ENCODE measurements at regions of chr3 and their contacts with region 1.

Region 1: DNA sequence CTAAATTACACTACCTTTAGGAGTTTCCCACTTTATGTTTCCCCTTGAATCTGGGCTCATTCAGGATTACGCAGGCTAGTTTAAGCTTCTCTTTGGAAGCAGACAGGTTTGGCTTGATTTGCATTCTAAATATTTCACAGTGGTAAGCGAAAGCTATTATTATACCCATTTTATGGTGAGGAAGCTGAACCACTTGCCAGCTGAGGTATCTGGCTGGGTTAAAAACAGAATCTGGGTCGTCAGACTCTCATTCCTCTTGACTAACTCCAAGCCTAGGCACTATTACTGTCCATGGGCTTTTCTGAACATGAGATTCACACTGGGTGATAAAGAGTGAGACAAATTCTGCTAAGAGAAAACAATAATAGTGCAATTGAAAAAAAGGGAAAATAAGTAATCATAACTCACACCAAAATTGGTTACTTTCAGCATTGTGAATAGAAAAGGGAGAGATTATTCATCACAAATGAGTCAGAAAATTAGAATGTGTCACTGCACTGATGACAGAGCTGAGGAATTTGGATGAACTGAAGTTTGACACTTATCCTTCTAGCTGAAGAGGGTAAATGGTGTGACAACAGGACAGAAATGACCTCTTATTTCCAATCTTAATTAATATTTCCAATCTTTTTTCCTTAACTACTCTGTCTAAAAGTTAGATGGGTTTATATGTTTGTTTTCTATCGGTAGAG is 211.3 kb downstream of the TIGIT start:
- DNase-seq: no peak
- H3K4me3 Mint-ChIP-seq: no peak overlapping the region
- H3K27ac Mint-ChIP-seq: no peak overlapping the region
- H3K4me1 Mint-ChIP-seq: peaks cover 9% of the 10 kb centered on the region
- H3K27me3 Mint-ChIP-seq: peaks cover 18% of the 10 kb centered on the region

Region 2: DNA sequence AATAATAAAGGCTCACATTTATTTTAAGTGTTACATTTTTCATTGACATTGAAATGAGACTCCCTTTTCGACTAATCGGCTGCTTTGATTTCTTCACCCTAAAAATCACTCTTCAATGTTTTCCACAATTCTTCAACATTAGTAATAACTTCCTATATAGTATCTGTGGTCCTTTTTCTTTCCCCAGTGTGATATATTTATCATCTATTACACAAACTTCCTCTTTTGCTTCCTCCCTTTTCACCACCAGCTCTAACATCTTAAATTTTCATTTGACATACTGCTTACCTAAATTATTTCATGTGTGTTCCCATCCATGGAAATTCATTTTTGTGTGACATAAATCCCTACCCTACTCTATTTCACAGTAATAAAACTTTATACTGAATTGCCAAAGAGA is 33.1 kb after region 1 on chr3:
- intact Hi-C with region 1: no loop called
- DNase-seq: no peak
- H3K4me3 Mint-ChIP-seq: no peak overlapping the region
- H3K27ac Mint-ChIP-seq: no peak overlapping the region
- H3K4me1 Mint-ChIP-seq: no peaks in the 10 kb centered on the region
- H3K27me3 Mint-ChIP-seq: no peaks in the 10 kb centered on the region

Region 3: DNA sequence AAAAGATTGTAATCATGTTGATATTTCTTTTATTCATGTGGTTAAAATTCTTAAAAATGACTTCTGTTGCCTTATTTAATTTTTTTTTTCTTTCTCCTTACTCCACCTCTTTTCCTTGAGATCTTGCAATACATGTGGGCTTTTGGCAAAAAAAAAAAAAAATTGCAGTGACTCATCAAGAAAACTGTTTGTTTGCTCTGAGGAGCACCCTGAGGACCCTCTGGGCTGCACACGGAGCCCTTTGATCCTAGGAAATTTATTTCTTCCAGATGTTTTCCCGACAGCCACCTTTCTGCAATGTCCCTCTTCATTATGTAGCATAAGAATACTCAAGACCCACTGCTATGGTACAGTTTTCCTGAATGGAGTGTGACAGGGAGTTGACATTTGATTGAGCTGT is 270.3 kb after region 1 on chr3:
- intact Hi-C with region 1: no loop called
- DNase-seq: no peak
- H3K4me3 Mint-ChIP-seq: no peak overlapping the region
- H3K27ac Mint-ChIP-seq: no peak overlapping the region
- H3K4me1 Mint-ChIP-seq: no peaks in the 10 kb centered on the region
- H3K27me3 Mint-ChIP-seq: no peaks in the 10 kb centered on the region

Region 4: DNA sequence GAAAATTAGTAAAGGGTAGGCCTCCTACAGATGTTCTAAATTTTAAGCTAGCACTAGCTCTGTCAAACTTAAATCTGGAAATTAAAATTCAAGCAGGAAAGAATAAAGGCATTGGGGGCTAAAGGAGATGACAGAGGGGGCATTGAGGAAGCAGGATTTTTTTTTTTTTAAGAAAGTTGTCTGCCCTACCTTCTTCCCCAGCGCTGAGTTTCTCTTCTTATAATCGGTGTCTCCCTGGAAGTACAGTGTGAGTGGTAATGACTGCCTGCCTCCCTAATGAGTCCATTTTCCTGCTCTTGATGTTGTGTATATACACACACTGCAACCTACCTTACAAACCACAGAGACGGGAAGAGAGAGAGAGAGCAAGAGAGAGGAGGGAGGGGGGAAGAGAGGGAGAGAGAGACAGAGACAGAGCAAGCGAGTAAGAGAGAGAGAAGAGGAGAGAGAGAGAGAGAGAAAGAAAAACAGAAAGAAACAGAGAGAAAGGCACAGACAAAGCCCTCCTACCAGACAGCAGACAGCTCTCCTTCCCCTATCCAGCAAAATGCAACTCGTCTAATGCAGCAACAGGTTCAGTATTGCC is 595.0 kb after region 1 on chr3:
- intact Hi-C with region 1: loop called (anchors 5 kb)
- DNase-seq: peak; percentile 10
- H3K4me3 Mint-ChIP-seq: peak overlapping the region; percentile 59
- H3K27ac Mint-ChIP-seq: peak overlapping the region; percentile 7
- H3K4me1 Mint-ChIP-seq: peaks cover 16% of the 10 kb centered on the region
- H3K27me3 Mint-ChIP-seq: no peaks in the 10 kb centered on the region

Measured in activated T-helper 1 cell treated with anti-CD3 and anti-CD28 coated beads, Interleukin-12 subunit alpha, Interleukin-12 subunit beta, Interleukin-2, Interleukin-4 antibody, amounts not matched to agents 30 ng/mL and 10 ng/mL and 1 ng/mL, durations not matched to agents 14 hours and 24 hours and 36 hours (primary cell).